ENCODE measurements at regions of chr4 and their contacts with region 1.

Region 1: DNA sequence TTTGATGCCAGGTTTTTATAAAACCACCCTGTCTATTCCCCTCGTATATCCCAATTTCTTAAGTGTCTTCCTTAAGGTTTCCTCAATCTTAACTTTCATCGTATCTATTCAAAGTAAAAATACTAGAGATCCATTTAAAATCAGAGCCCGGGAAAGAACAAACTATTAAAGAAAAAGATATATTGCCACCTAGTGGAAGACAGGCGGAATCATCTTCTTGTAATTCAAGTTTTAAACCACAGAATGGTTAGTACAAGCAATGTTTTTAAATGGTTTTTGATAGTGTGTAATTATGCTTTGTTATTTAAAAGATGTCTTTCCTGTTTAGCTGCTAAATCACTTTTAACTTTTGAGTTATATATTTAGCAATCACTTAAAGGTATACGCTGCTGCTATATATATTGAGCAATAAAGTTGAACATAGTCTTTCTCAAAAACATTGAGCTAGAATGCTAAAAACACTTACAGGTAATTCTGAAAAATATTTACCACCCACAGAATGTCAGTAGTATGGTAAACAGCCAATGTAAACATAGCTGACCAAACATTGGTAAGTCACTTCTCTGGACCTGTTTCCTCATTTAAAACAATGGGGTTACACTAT is 18.2 kb downstream of the PRDM8 start:
- DNase-seq: no peak
- ATAC-seq: peak; percentile 44

Region 2: GRCh38 chr4:78951862-78952472 is 1263.6 kb before region 1 on chr4:
- intact Hi-C with region 1: loop called (anchors 5 kb)
- DNase-seq: no peak
- ATAC-seq: peak; percentile 76

Region 3: DNA sequence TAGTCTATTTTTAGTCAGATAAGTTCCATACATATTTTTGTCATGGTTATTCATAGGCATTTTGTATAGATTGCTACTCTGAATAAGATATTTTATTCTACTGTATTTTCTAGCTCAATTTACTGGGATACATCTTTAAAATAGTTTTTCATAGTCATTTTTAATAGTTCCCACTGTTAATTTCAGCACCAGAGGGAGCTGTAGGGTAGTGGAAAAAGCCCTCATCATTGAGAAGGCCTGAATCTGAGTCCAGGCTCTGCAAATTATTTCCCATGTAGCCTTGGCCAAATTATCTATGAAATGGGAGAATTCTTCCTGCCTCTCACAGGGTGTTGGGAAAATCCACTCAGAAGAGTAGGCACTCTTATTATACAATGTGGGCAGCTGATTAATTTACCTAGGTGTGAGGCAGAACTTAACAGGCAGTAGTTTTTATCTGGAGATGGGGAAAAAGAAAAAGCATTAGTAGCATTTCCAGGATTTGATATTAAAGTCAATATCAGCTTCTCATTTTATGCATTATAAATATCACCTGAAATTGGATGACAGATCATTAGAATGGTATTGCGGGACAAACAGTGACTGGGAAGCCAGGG is 1173.4 kb before region 1 on chr4:
- intact Hi-C with region 1: loop called (anchors 10 kb)
- DNase-seq: no peak
- ATAC-seq: peak; percentile 60

Region 4: GRCh38 chr4:80184053-80184790 is 31.3 kb before region 1 on chr4:
- intact Hi-C with region 1: loop called (anchors 5 kb)
- DNase-seq: peak; percentile 94
- ATAC-seq: peak; percentile 98

Measured in left ventricle myocardium superior (tissue), 1 donor.